ENCODE measurements at regions of chr1 and their contacts with region 1.

Region 1: GRCh38 chr1:46148318-46148717 is 15.9 kb upstream of the PIK3R3 start:
- DNase-seq: no peak
- ATAC-seq: no peak
- H3K4me3 ChIP-seq: no peak overlapping the region
- H3K4me3 Mint-ChIP-seq: no peak overlapping the region
- H3K27ac ChIP-seq: no peak overlapping the region
- H3K27ac Mint-ChIP-seq: no peak overlapping the region
- H3K4me1 ChIP-seq: no peaks in the 10 kb centered on the region
- H3K4me1 Mint-ChIP-seq: no peaks in the 10 kb centered on the region
- H3K27me3 ChIP-seq: no peaks in the 10 kb centered on the region
- H3K27me3 Mint-ChIP-seq: no peaks in the 10 kb centered on the region

Region 2: GRCh38 chr1:46030876-46031660 is 117.2 kb before region 1 on chr1:
- CTCF ChIA-PET with region 1: no interaction called
- POLR2A ChIA-PET with region 1: no interaction called
- DNase-seq: no peak
- ATAC-seq: no peak
- H3K4me3 ChIP-seq: no peak overlapping the region
- H3K4me3 Mint-ChIP-seq: no peak overlapping the region
- H3K27ac ChIP-seq: no peak overlapping the region
- H3K27ac Mint-ChIP-seq: no peak overlapping the region
- H3K4me1 ChIP-seq: no peaks in the 10 kb centered on the region
- H3K4me1 Mint-ChIP-seq: no peaks in the 10 kb centered on the region
- H3K27me3 ChIP-seq: no peaks in the 10 kb centered on the region
- H3K27me3 Mint-ChIP-seq: no peaks in the 10 kb centered on the region

Region 3: DNA sequence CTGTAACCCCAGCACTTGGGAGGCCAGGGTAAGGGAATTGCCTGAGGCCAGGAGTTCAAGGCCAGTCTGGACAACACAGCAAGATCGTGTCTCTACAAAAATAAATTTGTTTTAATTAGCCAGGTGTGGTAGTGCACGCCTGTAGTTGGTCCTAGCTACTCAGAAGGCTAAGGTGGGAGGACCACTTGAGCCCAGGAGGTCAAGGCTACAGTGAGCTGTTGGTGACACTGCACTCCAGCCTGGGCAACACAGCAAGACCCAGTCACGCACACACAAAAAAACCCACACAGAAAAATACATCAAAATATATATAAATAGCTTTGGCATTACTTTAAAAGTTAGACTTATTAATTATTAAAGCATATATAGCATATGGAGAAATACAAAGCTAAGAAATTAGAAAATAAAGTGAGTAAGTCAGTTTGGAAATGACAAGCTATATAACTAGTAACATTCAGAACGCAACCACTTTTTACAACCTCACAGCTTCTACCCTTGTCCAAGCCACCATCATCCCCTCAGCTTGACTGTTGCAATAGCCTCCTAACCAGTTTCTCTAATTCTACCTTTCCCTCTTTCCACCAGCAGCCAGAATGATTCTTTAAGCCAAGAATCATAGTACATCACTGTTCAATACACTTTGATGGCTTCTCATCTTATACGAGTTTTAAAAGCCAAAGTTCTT is 30.4 kb before region 1 on chr1:
- CTCF ChIA-PET with region 1: interaction called in 1 of 2 experiments, 11 read pairs
- POLR2A ChIA-PET with region 1: no interaction called
- DNase-seq: no peak
- ATAC-seq: no peak
- H3K4me3 ChIP-seq: no peak overlapping the region
- H3K4me3 Mint-ChIP-seq: no peak overlapping the region
- H3K27ac ChIP-seq: no peak overlapping the region
- H3K27ac Mint-ChIP-seq: no peak overlapping the region
- H3K4me1 ChIP-seq: no peaks in the 10 kb centered on the region
- H3K4me1 Mint-ChIP-seq: peaks cover 0 to 5% (median 2%) of the 10 kb centered on the region in 3 donors
- H3K27me3 ChIP-seq: no peaks in the 10 kb centered on the region
- H3K27me3 Mint-ChIP-seq: peaks cover 2 to 4% of the 10 kb centered on the region in 2 donors

Region 4: DNA sequence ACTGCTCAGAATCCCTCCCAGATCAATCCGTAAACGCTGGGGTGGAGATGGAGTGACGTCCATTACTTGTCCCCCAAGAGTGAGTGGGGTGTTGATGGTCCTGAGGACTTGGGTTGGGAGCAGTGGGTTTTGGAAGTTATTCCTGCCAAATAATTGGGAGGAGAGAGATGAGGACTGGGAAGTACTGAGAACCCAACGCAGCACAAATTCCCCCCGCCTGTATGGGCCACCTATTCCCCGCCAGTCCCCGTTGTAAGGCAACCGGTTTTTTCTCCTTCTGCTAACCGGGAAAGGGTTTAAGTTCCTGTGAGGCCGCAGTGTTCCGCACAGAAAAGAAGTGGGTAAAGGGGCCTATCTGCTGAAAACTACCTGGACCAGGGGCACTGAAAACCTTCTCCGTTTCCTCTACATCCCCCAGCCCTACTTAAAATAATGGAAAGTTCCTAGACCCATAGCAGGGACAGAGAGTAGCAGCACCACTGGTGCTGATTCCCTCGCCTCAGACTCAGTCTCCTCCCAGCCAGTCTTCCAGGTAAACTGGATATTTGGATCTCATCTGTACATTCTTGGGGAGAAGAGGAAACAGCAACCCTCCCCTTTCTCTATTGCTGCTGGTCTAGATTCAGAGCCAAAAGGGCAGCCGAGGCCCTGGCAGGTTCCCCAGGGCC is 55.6 kb after region 1 on chr1:
- CTCF ChIA-PET with region 1: no interaction called
- POLR2A ChIA-PET with region 1: no interaction called
- DNase-seq: no peak
- ATAC-seq: no peak
- H3K4me3 ChIP-seq: peak overlapping the region in 1 of 2 donors; percentile 46
- H3K4me3 Mint-ChIP-seq: peak overlapping the region; percentile 76 to 78 (median 77)
- H3K27ac ChIP-seq: no peak overlapping the region
- H3K27ac Mint-ChIP-seq: peak overlapping the region; percentile 18 to 31
- H3K4me1 ChIP-seq: peaks cover 4 to 15% of the 10 kb centered on the region in 2 experiments
- H3K4me1 Mint-ChIP-seq: peaks cover 19 to 23% (median 22%) of the 10 kb centered on the region in 3 donors
- H3K27me3 ChIP-seq: peaks cover 0 to 9% of the 10 kb centered on the region in 2 experiments
- H3K27me3 Mint-ChIP-seq: peaks cover 0 to 3% of the 10 kb centered on the region in 2 donors

Region 5: DNA sequence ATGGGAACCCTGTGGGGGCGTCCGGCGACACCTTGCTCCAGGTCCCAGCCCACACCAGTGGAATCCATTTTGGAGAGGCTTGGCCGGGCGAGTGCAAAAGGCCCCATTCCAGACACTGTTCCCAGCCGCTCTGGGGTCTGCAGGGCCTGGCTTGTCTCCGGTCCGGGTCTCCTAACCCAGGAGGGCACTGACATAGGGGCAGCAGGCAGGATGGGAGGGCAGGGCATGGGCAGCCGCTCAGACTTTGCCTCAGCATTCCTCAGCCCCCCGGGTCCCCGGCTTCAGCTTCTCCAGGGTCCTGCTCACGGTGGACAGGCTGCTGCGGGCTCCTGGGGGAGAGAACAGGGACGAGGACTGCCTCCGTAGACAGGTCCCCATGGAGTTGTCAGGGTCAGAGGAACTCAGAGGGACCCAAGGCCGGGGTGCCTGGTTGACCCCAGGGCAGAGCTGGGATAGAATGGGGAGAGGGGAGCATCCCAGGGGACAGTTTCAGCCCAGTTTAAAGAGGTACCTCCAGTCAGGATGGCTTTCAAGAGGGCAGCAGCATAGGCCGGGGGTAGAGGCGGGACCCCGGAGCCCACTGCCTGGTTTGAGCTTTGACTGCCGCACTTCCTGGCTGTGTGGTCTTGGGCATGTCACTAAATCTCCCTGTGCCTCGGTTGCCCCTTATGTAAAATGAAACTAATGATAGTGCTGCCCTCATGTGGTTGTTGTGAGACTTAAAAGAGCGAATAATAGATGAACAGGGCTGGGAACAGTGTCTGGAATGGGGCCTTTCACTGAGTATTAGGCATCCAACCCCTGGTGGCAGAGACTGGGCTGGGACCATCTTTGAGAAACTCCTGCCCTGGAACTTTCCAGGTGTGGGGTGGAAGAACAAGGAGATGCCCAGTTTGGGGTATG is 399.4 kb after region 1 on chr1:
- CTCF ChIA-PET with region 1: no interaction called
- POLR2A ChIA-PET with region 1: no interaction called
- DNase-seq: peak in 1 of 35 experiments; percentile 60
- ATAC-seq: peak in 2 of 4 experiments; percentile 22 to 41
- H3K4me3 ChIP-seq: no peak overlapping the region
- H3K4me3 Mint-ChIP-seq: no peak overlapping the region
- H3K27ac ChIP-seq: no peak overlapping the region
- H3K27ac Mint-ChIP-seq: no peak overlapping the region
- H3K4me1 ChIP-seq: peaks cover 0 to 26% of the 10 kb centered on the region in 2 experiments
- H3K4me1 Mint-ChIP-seq: peaks cover 12 to 16% (median 15%) of the 10 kb centered on the region in 3 donors
- H3K27me3 ChIP-seq: peaks cover 14 to 71% of the 10 kb centered on the region in 2 experiments
- H3K27me3 Mint-ChIP-seq: peaks cover 34 to 40% of the 10 kb centered on the region in 2 donors